SK-N-SH (cell line): ENCODE measurements at regions of chr17 and their contacts with region 1.

Region 1: GRCh38 chr17:81200695-81201580 is 21.8 kb downstream of the CEP131 start:
- DNase-seq: peak; percentile 91
- H3K4me3 ChIP-seq: no peak overlapping the region
- H3K27ac ChIP-seq: peak overlapping the region in 1 of 2 experiments; percentile 13; a peak in 1 of 4 replicates
- H3K4me1 ChIP-seq: peaks cover 0 to 3% of the 10 kb centered on the region in 2 experiments; a peak in 1 of 4 replicates
- H3K27me3 ChIP-seq: no peaks in the 10 kb centered on the region
- CTCF ChIP-seq: peak; percentile 73
- EP300 ChIP-seq: no peak
- RAD21 ChIP-seq: peak; percentile 75

Region 2: GRCh38 chr17:81130385-81131288 is 70.3 kb before region 1 on chr17:
- CTCF ChIA-PET with region 1: interaction called, 14 read pairs
- POLR2A ChIA-PET with region 1: no interaction called
- DNase-seq: no peak
- H3K4me3 ChIP-seq: no peak overlapping the region
- H3K27ac ChIP-seq: no peak overlapping the region
- H3K4me1 ChIP-seq: no peaks in the 10 kb centered on the region; a peak in 1 of 4 replicates
- H3K27me3 ChIP-seq: peaks cover 6% of the 10 kb centered on the region; the same call in 1 of the 2 replicates
- CTCF ChIP-seq: no peak
- EP300 ChIP-seq: no peak
- RAD21 ChIP-seq: no peak

Region 3: DNA sequence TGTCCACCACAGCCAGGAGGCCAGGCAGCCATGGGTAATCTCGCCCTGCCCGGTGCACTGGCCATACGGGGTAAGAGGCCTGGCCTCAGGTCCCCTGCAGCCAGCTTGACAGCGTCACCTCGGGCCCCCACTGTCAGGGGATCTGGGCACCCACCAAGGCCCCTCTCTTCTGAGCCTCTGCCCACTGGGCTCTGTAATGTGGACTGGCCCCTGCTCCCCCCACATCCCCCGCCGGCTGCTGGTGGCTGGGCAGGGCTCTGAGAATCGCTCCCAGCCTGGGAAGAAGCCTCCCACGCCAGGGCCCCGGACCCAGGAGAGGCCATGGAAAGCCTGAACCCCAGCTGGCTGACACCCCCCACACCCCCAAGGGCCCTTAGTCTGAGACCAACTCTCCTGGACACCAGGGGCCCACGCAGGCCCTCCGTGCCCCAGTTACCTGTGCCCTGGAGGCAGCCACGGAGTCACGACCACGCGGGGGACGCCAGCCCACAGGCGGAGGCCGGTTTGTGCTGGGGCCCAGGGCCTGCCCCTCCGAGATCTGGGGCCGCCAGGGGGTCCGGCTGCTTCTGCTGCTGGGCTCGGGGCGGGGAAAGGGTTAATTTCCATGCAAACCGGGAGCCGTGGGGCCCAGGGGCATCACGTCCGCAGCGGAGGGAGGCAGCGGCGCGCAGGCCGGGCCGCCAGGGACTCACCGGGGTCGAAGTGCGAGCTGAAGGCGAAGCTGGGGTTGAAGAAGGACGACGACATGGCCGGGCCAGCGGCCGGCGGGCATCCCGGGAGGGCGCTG is 35.5 kb before region 1 on chr17 and contains the start of gene PVALEF:
- CTCF ChIA-PET with region 1: interaction called, 10 read pairs
- POLR2A ChIA-PET with region 1: no interaction called
- DNase-seq: no peak
- H3K4me3 ChIP-seq: peak within 1 kb of the TSS; percentile 46 to 53
- H3K27ac ChIP-seq: peak within 1 kb of the TSS in 1 of 2 experiments; percentile 85; a peak in 2 of 4 replicates
- H3K4me1 ChIP-seq: peaks cover 0 to 26% of the 10 kb centered on the region in 2 experiments; a peak in 1 of 4 replicates
- H3K27me3 ChIP-seq: peaks cover 22% of the 10 kb centered on the region; the same call in 1 of the 2 replicates
- CTCF ChIP-seq: no peak
- EP300 ChIP-seq: no peak
- RAD21 ChIP-seq: no peak
- polyA plus RNA-seq, gene PVALEF: not detected in 2 replicates

Region 4: DNA sequence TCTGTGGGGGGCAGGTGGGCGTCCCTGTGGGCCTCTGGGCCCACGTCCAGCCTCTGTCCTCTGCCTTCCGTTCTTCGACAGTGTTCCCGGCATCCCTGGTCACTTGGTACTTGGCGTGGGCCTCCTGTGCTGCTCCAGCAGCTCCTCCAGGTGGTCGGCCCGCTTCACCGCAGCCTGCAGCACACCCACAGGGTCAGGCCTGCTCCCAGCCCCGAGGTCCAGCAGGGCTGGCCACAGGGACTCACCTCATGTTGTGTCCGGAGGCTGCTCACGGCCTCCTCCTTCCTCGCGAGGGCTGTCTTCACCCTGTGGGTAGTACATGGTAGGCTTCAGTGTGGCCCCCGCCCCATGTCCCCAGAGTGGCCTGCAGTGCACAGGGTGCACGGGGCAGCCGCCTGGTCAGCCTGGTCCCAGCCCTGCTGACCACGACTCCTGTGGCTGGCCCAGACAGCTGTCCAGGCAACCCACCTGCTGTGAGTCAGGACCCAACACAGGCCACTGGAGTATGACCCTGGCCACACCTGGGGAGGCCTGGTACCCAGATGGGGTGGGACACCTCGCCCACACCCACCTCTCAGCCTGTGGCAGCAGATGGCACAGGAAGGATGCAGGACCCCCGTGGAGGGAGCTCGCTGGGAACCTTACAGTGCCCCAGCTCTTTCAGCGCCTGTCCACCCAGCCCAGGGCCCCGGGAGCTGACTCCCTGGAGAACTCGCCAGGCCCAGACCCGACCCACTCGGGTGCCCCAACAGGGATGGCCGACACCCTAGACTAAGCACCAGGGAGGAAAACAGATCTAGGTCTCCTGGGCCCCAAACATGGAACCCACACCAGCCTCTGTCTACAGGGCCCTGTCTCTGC is 11.0 kb before region 1 on chr17:
- CTCF ChIA-PET with region 1: interaction called, 28 read pairs
- POLR2A ChIA-PET with region 1: no interaction called
- DNase-seq: peak; percentile 74
- H3K4me3 ChIP-seq: no peak overlapping the region
- H3K27ac ChIP-seq: no peak overlapping the region
- H3K4me1 ChIP-seq: no peaks in the 10 kb centered on the region; a peak in 1 of 4 replicates
- H3K27me3 ChIP-seq: no peaks in the 10 kb centered on the region
- CTCF ChIP-seq: peak; percentile 14; the same call in 1 of the 2 replicates
- EP300 ChIP-seq: no peak
- RAD21 ChIP-seq: peak; percentile 58

Region 5: GRCh38 chr17:81238817-81239600 is 38.1 kb after region 1 on chr17 and contains the starts of genes NDUFAF8 and TEPSIN:
- CTCF ChIA-PET with region 1: interaction called, 11 read pairs
- POLR2A ChIA-PET with region 1: no interaction called
- DNase-seq: peak; percentile 100
- H3K4me3 ChIP-seq: peak within 1 kb of the TSS; percentile 93 to 99
- H3K27ac ChIP-seq: peak within 1 kb of the TSS; percentile 43 to 84; a peak in 3 of 4 replicates
- H3K4me1 ChIP-seq: peaks cover 0 to 40% of the 10 kb centered on the region in 2 experiments; a peak in 2 of 4 replicates
- H3K27me3 ChIP-seq: no peaks in the 10 kb centered on the region
- CTCF ChIP-seq: no peak
- EP300 ChIP-seq: no peak
- RAD21 ChIP-seq: no peak
- polyA plus RNA-seq, gene NDUFAF8: 194 and 229 TPM in 2 replicates
- polyA plus RNA-seq, gene TEPSIN: 35.3 and 36.1 TPM in 2 replicates